Ovary (tissue), 10 donors: ENCODE measurements at regions of chr10 and their contacts with region 1.

Region 1: GRCh38 chr10:18325889-18326531 is 185.8 kb downstream of the CACNB2 start:
- DNase-seq: no peak
- H3K4me3 ChIP-seq: no peak overlapping the region
- H3K27ac ChIP-seq: no peak overlapping the region
- H3K4me1 ChIP-seq: peaks cover 2% of the 10 kb centered on the region
- H3K27me3 ChIP-seq: no peaks in the 10 kb centered on the region
- CTCF ChIP-seq: no peak
- EP300 ChIP-seq: no peak
- POLR2A ChIP-seq: no peak

Region 2: GRCh38 chr10:18229826-18230225 is 96.2 kb before region 1 on chr10:
- intact Hi-C with region 1: loop called in 1 of 4 experiments (anchors 10 kb)
- DNase-seq: no peak
- H3K4me3 ChIP-seq: no peak overlapping the region
- H3K27ac ChIP-seq: no peak overlapping the region
- H3K4me1 ChIP-seq: peaks cover 12% of the 10 kb centered on the region
- H3K27me3 ChIP-seq: no peaks in the 10 kb centered on the region
- CTCF ChIP-seq: no peak
- EP300 ChIP-seq: no peak
- POLR2A ChIP-seq: no peak